Spleen (tissue), 13 donors: ENCODE measurements at regions of chr11 and their contacts with region 1.

Region 1: DNA sequence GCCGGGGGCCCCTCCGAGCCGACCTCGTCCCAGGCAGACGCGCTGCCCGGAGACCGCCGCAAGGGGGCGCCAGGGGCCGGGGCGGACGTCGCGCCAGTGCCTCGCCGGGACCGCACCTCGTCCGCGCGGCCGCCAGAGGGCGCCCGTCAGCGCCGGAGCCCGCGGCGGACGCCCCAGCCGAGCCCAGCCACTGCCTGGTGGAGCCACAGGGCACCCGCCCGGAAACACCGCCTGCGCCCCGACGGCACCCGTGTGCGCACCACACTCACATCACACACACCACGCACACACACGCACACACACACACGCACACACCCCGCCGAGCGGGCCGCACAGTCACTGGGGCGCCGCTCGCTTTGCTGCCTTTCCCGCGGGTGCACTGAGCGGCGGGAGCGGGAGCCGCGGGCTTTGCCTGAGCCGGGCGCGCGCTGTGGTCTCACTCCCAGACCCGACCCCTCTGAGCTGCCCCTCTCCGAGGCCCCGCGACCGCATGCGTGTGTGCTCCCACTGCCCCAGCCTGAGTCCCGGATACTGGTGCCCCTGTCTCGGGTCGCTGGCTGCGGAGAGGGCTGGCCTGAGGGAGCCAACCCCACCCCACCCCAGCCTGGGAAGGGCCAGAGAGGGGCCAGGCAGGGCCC is 449.3 kb downstream of the OPCML start:
- DNase-seq: peak; percentile 87
- H3K4me3 ChIP-seq: peak overlapping the region; percentile 9 to 63 (median 18)
- H3K27ac ChIP-seq: no peak overlapping the region
- H3K4me1 ChIP-seq: peaks cover 0 to 11% (median 6%) of the 10 kb centered on the region in 6 donors
- H3K27me3 ChIP-seq: peaks cover 0 to 79% (median 8%) of the 10 kb centered on the region in 7 donors
- CTCF ChIP-seq: peak in 8 of 11 experiments; percentile 27 to 90 (median 76)
- POLR2A ChIP-seq: no peak

Region 2: DNA sequence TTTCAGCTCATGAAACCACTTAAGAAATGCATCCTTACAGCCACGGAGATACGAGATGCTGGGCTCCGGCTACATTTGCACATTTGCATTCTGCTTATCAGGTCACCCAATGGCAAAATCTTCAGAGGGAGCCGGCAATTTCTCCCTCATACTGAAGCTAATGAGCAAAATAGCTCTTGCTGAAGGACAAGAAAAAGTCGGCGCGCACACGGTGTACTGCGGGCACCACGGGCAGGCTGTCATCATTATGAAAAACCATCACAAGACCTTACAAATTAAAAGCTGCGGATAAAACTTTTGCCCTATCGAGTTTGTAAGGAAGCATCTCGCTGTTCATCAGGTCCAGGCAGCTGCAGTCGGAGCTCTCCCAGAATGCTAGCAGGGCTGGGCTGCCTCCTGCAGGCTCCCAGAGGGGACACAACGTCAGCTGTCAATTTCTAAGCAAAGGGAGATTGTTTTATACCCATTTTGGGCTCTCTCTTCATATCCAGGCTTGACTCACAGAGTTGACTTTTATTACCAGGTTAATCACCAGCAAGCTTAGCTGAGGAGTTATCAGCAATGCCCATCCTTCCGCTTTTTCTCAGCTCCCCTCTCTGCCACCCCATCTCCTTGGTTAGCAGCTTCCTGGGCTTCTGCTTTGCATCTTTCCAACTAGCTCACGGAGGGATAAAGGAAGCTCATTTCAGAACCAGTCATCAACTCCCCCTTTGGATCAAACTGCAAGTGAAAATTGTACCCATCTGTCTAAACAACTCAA is 74.2 kb after region 1 on chr11:
- intact Hi-C with region 1: loop called (anchors 10 kb)
- DNase-seq: no peak
- H3K4me3 ChIP-seq: no peak overlapping the region
- H3K27ac ChIP-seq: no peak overlapping the region
- H3K4me1 ChIP-seq: no peaks in the 10 kb centered on the region
- H3K27me3 ChIP-seq: peaks cover 0 to 55% (median 4%) of the 10 kb centered on the region in 7 donors
- CTCF ChIP-seq: peak in 1 of 11 experiments; percentile 26
- POLR2A ChIP-seq: no peak